ENCODE measurements at regions of chr6 and their contacts with region 1.

Region 1: GRCh38 chr6:33579828-33580714 is at the start of gene BAK1:
- DNase-seq: peak; percentile 94 to 97 (median 96)
- ATAC-seq: peak; percentile 94 to 95
- H3K4me3 ChIP-seq: peak within 1 kb of the TSS; percentile 93
- H3K27ac ChIP-seq: peak within 1 kb of the TSS; percentile 55
- H3K4me1 ChIP-seq: peaks cover 5% of the 10 kb centered on the region
- H3K27me3 ChIP-seq: no peaks in the 10 kb centered on the region
- total RNA-seq, gene BAK1: 14.6 to 17.8 (median 16.7) TPM

Region 2: DNA sequence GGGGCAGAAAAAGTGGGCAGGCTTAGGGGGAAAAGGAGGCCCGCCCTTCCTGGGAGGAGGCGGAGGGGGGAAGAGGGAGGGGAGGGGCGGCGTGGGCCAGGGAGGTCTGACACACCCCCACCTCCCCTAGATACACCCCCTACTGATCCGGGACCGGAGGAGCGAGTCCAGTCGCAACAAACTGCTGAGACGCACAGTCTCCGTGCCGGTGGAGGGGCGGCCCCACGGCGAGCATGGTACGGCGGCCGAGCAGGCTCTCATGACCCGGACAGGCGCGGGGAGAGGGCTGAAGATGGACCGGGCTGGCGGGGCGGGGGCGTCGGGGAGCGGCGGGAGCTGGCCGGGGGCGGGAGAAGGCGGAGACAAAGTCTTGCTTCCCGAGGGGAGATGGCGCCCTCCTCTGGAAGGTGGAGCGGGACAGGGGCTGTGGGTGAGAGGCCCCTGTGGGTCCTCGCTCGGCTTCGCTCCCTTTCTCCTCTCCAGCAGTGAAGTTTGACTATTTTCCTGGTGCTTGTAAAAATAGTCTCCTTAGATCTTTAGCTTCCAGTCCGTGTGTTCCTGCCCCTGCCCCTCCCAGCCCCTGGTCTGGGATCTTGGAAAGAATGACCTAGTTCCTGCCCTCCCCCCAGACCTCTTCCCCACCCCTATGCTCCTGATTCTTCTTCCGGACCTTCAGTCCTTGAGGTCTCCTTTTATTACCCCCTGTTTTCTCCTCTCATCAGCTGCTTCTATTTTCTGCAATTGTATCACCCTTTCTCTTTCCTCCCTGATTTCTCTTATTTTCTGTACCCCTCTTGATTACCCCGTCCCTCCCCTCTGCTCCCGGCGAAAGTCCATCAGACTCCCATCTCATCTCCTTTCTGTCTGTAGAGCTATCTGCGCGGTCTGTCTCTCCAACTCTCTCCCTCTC is 154.1 kb before region 1 on chr6:
- intact Hi-C with region 1: loop called in 1 of 4 experiments (anchors 10 kb)
- DNase-seq: peak; percentile 89 to 95 (median 93)
- ATAC-seq: peak; percentile 85 to 89
- H3K4me3 ChIP-seq: peak overlapping the region; percentile 62
- H3K27ac ChIP-seq: peak overlapping the region; percentile 97
- H3K4me1 ChIP-seq: peaks cover 14% of the 10 kb centered on the region
- H3K27me3 ChIP-seq: no peaks in the 10 kb centered on the region

Region 3: DNA sequence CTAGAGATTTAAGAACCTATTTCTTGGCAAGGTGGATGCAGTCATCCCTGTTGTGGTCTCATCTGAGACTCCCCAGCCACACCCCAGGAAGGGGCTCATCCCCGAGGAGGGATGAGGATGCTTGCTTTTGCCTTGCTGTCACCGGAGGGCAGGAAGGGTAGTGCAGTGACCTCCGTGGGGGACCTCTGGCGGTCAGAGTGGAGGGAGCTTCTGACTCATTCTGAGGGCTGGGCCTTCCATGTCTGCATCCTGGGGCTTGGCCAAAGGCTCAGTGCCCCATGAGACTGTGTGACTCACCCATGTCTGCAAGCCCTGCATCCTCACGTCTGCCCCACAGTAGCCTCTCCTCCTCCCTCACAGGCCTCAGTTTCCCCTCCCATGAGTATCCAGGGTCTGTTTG is 92.7 kb after region 1 on chr6:
- intact Hi-C with region 1: loop called in 2 of 4 experiments (anchors 5 to 10 kb)
- DNase-seq: peak; percentile 92 to 96 (median 94)
- ATAC-seq: peak; percentile 91 to 95
- H3K4me3 ChIP-seq: no peak overlapping the region
- H3K27ac ChIP-seq: no peak overlapping the region
- H3K4me1 ChIP-seq: no peaks in the 10 kb centered on the region
- H3K27me3 ChIP-seq: no peaks in the 10 kb centered on the region

Region 4: GRCh38 chr6:33744001-33744848 is 164.2 kb after region 1 on chr6:
- intact Hi-C with region 1: loop called in 1 of 4 experiments (anchors 5 kb)
- DNase-seq: peak; percentile 71 to 87 (median 84)
- ATAC-seq: peak; percentile 16 to 46
- H3K4me3 ChIP-seq: peak overlapping the region; percentile 30
- H3K27ac ChIP-seq: peak overlapping the region; percentile 57
- H3K4me1 ChIP-seq: peaks cover 5% of the 10 kb centered on the region
- H3K27me3 ChIP-seq: no peaks in the 10 kb centered on the region

Region 5: DNA sequence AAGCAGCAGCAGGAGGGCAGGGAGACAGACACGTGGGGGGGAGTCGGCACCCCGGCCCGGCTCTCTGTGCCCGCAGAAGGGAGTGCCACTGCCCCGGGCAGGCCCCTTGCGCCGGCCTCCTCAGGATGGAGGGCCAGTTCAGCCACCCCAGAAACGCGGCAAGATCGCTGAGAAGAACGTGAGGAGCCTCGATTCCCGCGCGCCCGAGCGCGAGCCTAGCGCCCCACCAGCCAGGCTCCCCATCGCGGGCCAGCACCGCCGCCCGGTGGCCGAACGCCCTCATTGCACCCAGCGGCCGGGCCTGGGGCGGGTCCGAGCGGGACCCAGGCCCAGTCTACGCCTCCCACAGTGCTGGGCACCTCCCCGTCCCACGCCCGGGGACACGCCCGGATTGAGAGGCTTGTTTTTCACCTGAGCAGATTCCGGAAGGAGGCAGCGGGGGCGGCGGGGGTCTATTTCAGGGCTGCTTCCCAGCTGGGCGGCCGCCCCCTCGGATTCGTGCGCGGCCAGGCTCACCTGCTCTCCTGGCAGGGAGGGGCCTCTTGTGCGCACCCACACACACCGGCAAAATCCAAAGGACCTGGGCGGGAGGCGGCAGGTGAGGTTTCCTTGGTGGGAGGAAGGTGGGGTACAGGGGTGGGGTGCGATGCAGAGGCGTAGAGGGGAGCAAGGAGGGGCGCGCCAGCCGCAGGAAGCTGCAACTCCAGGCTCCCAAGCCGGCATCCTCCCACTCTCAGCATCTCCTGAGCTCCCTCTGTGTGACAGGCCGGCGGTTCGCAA is 574.8 kb after region 1 on chr6:
- intact Hi-C with region 1: loop called in 1 of 4 experiments (anchors 10 kb)
- DNase-seq: peak; percentile 41 to 83 (median 81)
- ATAC-seq: peak; percentile 73 to 80
- H3K4me3 ChIP-seq: peak overlapping the region; percentile 11
- H3K27ac ChIP-seq: no peak overlapping the region
- H3K4me1 ChIP-seq: no peaks in the 10 kb centered on the region
- H3K27me3 ChIP-seq: no peaks in the 10 kb centered on the region

Measured in right cardiac atrium (tissue), 5 donors.